Activated CD4-positive, alpha-beta T cell treated with anti-CD3 and anti-CD28 coated beads for 36 hours (primary cell): ENCODE measurements at regions of chr10 and their contacts with region 1.

Region 1: GRCh38 chr10:125828311-125828710 is 5.0 kb downstream of the BCCIP start:
- DNase-seq: peak; percentile 10
- ATAC-seq: peak; percentile 56
- H3K4me3 Mint-ChIP-seq: no peak overlapping the region
- H3K27ac Mint-ChIP-seq: peak overlapping the region; percentile 43
- H3K4me1 Mint-ChIP-seq: peaks cover 29% of the 10 kb centered on the region
- H3K27me3 Mint-ChIP-seq: no peaks in the 10 kb centered on the region

Region 2: DNA sequence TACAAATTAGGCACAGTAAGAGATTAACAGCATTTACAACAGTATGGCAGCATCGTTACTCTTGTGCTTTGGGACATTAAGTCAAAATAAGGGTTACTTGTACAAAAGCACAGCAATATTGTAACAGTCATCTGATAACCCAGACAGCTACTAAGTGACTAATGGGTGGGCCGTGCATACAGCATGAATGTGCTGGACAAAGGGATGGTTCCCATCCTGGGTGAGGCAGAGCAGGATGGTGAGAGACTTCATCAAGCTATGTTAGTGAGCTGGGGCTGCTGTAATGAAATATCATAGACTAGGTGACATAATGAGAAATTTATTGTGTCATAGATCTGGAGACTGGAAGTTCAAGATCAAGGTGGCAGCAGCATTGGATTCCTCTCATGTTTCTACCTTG is 83.4 kb before region 1 on chr10:
- CTCF ChIA-PET with region 1: no interaction called
- POLR2A ChIA-PET with region 1: no interaction called
- intact Hi-C with region 1: loop called in 1 of 2 experiments (anchors 2 kb)
- DNase-seq: no peak
- ATAC-seq: no peak
- H3K4me3 Mint-ChIP-seq: no peak overlapping the region
- H3K27ac Mint-ChIP-seq: no peak overlapping the region
- H3K4me1 Mint-ChIP-seq: no peaks in the 10 kb centered on the region
- H3K27me3 Mint-ChIP-seq: no peaks in the 10 kb centered on the region